ENCODE measurements at regions of chr17 and their contacts with region 1.

Region 1: GRCh38 chr17:45719335-45720071 is 64.6 kb upstream of the CRHR1 start:
- DNase-seq: no peak
- H3K4me3 ChIP-seq: no peak overlapping the region
- H3K27ac ChIP-seq: no peak overlapping the region
- H3K4me1 ChIP-seq: no peaks in the 10 kb centered on the region
- H3K27me3 ChIP-seq: no peaks in the 10 kb centered on the region; the same call in 1 of the 2 replicates
- CTCF ChIP-seq: peak; percentile 54
- EP300 ChIP-seq: no peak
- RAD21 ChIP-seq: no peak

Region 2: DNA sequence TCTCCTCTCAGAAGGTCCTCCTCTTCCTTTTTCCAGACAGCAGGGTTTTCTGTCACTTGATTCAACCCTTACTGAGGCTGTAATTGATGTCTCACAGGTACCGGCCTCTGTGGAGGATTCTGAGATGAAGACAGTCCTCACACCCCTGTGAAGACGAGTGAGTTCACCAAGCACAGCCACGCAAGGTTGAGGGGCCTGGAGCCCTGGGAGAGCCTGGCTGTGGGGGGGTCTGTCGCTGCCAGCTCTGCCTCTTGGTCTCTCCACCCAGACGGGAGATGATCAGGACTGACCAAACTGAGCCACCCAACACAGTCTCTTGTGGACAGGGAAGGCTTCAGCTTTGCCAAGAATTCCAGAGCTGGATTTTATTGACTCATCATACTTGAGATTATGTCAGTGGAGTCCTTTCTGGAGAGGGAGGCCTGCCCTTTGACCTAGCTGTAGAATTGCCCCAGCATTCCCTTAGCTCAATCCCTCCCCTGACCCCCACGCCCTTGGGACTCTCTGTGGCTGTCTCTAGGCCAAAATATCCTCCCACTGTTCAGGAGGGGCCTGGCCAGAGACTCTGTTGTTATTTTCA is 13.5 kb after region 1 on chr17:
- CTCF ChIA-PET with region 1: interaction called, 10 read pairs
- POLR2A ChIA-PET with region 1: no interaction called
- DNase-seq: no peak
- H3K4me3 ChIP-seq: no peak overlapping the region
- H3K27ac ChIP-seq: no peak overlapping the region
- H3K4me1 ChIP-seq: no peaks in the 10 kb centered on the region
- H3K27me3 ChIP-seq: no peaks in the 10 kb centered on the region
- CTCF ChIP-seq: no peak
- EP300 ChIP-seq: no peak
- RAD21 ChIP-seq: no peak

Region 3: GRCh38 chr17:45834471-45835396 is 115.2 kb after region 1 on chr17:
- CTCF ChIA-PET with region 1: interaction called, 68 read pairs
- POLR2A ChIA-PET with region 1: no interaction called
- DNase-seq: no peak
- H3K4me3 ChIP-seq: no peak overlapping the region
- H3K27ac ChIP-seq: no peak overlapping the region
- H3K4me1 ChIP-seq: peaks cover 0 to 3% of the 10 kb centered on the region in 2 experiments; a peak in 1 of 4 replicates
- H3K27me3 ChIP-seq: peaks cover 13% of the 10 kb centered on the region; the same call in 1 of the 2 replicates
- CTCF ChIP-seq: no peak
- EP300 ChIP-seq: no peak
- RAD21 ChIP-seq: no peak

Region 4: GRCh38 chr17:45841883-45842525 is 122.5 kb after region 1 on chr17:
- CTCF ChIA-PET with region 1: interaction called, 16 read pairs
- POLR2A ChIA-PET with region 1: no interaction called
- DNase-seq: no peak
- H3K4me3 ChIP-seq: no peak overlapping the region
- H3K27ac ChIP-seq: no peak overlapping the region
- H3K4me1 ChIP-seq: peaks cover 0 to 7% of the 10 kb centered on the region in 2 experiments; a peak in 1 of 4 replicates
- H3K27me3 ChIP-seq: peaks cover 17% of the 10 kb centered on the region
- CTCF ChIP-seq: no peak
- EP300 ChIP-seq: no peak
- RAD21 ChIP-seq: no peak

Region 5: GRCh38 chr17:46135879-46136563 is 416.5 kb after region 1 on chr17:
- CTCF ChIA-PET with region 1: no interaction called
- POLR2A ChIA-PET with region 1: no interaction called
- DNase-seq: no peak
- H3K4me3 ChIP-seq: no peak overlapping the region
- H3K27ac ChIP-seq: peak overlapping the region in 1 of 2 experiments; percentile 40; a peak in 2 of 4 replicates
- H3K4me1 ChIP-seq: peaks cover 9 to 15% of the 10 kb centered on the region in 2 experiments; a peak in 3 of 4 replicates
- H3K27me3 ChIP-seq: no peaks in the 10 kb centered on the region
- CTCF ChIP-seq: no peak
- EP300 ChIP-seq: no peak
- RAD21 ChIP-seq: no peak

Measured in SK-N-SH (cell line).